PC-3 (cell line): ENCODE measurements at regions of chr4 and their contacts with region 1.

Region 1: GRCh38 chr4:180828440-180829018 is 1414.7 kb upstream of the TENM3 start:
- DNase-seq: peak; percentile 73
- ATAC-seq: no peak
- H3K4me3 ChIP-seq: no peak overlapping the region
- H3K27ac ChIP-seq: no peak overlapping the region
- H3K4me1 ChIP-seq: peaks cover 13% of the 10 kb centered on the region; the same call in 1 of the 2 replicates
- H3K27me3 ChIP-seq: no peaks in the 10 kb centered on the region
- CTCF ChIP-seq: peak; percentile 79

Region 2: GRCh38 chr4:180947425-180947824 is 118.9 kb after region 1 on chr4:
- CTCF ChIA-PET with region 1: no interaction called
- POLR2A ChIA-PET with region 1: no interaction called
- intact Hi-C with region 1: loop called (anchors 5 kb)
- DNase-seq: peak; percentile 63
- ATAC-seq: no peak
- H3K4me3 ChIP-seq: no peak overlapping the region
- H3K27ac ChIP-seq: no peak overlapping the region
- H3K4me1 ChIP-seq: peaks cover 7% of the 10 kb centered on the region; the same call in 1 of the 2 replicates
- H3K27me3 ChIP-seq: no peaks in the 10 kb centered on the region
- CTCF ChIP-seq: peak; percentile 55

Region 3: DNA sequence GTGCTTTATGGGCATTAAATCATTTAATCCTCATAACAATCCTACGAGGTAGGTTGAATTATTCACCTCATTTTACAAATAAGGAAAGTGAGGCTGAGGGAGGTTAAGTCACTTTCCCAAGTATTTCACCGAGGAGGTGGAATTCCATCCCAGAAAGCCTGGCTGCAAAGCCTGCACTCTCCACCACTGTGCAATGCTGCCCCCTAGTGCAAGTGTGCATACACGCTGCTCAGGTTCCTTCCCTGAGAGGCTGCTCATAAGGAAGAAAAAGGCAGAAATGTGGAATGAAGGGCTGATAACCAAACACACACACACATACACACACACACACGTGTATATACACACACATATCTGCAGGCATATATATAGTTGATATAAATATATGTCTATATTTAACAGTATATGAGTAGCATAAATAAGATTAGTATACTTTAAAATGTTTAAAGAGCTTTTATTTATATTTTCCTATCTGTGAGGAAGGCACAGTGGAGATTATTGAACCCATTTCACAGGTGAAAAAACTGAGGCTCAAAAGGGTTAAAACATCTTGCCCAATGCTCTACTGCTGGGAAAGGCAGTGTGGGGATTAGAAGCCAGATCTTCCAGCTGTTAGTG is 700.1 kb after region 1 on chr4:
- CTCF ChIA-PET with region 1: no interaction called
- POLR2A ChIA-PET with region 1: no interaction called
- intact Hi-C with region 1: loop called (anchors 5 kb)
- DNase-seq: peak; percentile 71
- ATAC-seq: peak; percentile 64
- H3K4me3 ChIP-seq: no peak overlapping the region
- H3K27ac ChIP-seq: no peak overlapping the region
- H3K4me1 ChIP-seq: no peaks in the 10 kb centered on the region
- H3K27me3 ChIP-seq: no peaks in the 10 kb centered on the region
- CTCF ChIP-seq: peak; percentile 80

Region 4: DNA sequence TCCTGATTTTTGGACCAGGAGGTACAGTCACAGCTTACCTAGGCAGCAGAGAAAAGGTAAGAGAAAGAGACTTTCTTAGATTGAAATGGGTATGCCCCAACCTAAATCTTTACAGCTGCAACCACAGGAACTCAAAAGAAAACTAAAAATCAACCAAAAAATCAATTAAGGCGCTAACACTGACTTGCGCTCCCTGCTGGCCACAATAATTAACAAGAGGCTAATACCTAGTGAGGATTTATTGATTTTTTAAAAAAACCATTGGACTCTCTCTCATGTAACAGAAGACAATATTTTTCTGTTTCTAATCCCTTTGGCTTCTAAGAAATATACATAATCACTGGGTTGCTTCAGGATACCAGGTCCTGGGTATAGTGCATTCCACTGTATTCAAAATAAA is 1260.8 kb after region 1 on chr4:
- CTCF ChIA-PET with region 1: no interaction called
- POLR2A ChIA-PET with region 1: no interaction called
- intact Hi-C with region 1: loop called (anchors 10 kb)
- DNase-seq: peak; percentile 13
- ATAC-seq: no peak
- H3K4me3 ChIP-seq: no peak overlapping the region
- H3K27ac ChIP-seq: no peak overlapping the region
- H3K4me1 ChIP-seq: no peaks in the 10 kb centered on the region
- H3K27me3 ChIP-seq: 0 out of 2 replicates have a peak, but pooled peaks cover 3% of the 10 kb centered on the region
- CTCF ChIP-seq: peak; percentile 59